Thyroid gland (tissue), 4 donors: ENCODE measurements at regions of chr2 and their contacts with region 1.

Region 1: GRCh38 chr2:107361751-107362381 is 464.8 kb upstream of the RGPD4 start:
- DNase-seq: no peak
- H3K4me3 ChIP-seq: no peak overlapping the region
- H3K27ac ChIP-seq: peak overlapping the region in 2 of 3 donors; percentile 68 to 82
- H3K4me1 ChIP-seq: peaks cover 49 to 52% of the 10 kb centered on the region in 2 donors
- H3K27me3 ChIP-seq: no peaks in the 10 kb centered on the region
- CTCF ChIP-seq: no peak
- POLR2A ChIP-seq: no peak

Region 2: DNA sequence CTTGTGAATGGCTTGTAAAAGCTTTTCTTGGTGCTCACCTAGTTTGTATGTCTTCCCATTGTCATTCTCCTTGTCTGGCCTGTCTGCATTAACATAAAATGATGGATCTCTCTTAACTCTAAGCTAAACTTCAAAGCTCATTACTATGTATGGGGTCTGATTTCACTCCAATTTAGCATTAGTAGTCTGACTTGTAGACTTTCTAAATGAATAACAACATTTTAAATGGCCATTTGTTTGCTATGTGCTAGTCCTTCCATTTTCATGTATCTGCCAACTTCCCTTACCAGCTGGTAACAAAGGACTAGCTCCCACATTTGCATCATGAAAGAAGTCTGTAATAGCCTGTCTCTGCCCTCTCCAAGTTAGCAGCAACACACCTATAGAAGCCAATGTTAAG is 140.7 kb after region 1 on chr2:
- intact Hi-C with region 1: loop called (anchors 10 kb)
- DNase-seq: no peak
- H3K4me3 ChIP-seq: no peak overlapping the region
- H3K27ac ChIP-seq: no peak overlapping the region
- H3K4me1 ChIP-seq: peaks cover 30 to 31% of the 10 kb centered on the region in 2 donors
- H3K27me3 ChIP-seq: no peaks in the 10 kb centered on the region
- CTCF ChIP-seq: no peak
- POLR2A ChIP-seq: no peak

Region 3: DNA sequence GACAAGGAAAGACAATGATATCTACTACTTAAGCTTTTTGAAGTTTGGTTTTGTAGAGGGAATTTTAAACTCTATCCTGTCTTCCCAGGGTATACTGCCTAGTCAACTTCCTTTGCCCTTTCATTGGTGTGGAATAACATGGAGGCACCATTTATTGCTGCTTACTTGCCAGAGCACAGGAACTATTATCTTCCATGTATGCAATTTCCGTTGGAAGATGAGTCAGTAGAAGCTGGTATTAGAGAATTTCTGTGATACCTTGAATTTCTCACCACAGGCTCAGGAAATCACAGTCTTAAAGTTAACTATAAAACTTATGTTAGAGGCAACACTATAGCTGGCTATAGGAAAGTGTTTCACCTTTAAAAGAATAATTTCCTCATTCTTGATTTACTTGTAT is 423.9 kb after region 1 on chr2:
- intact Hi-C with region 1: no loop called
- DNase-seq: no peak
- H3K4me3 ChIP-seq: no peak overlapping the region
- H3K27ac ChIP-seq: no peak overlapping the region
- H3K4me1 ChIP-seq: no peaks in the 10 kb centered on the region
- H3K27me3 ChIP-seq: no peaks in the 10 kb centered on the region
- CTCF ChIP-seq: no peak
- POLR2A ChIP-seq: no peak